Aorta (tissue), 5 donors: ENCODE measurements at regions of chr11 and their contacts with region 1.

Region 1: DNA sequence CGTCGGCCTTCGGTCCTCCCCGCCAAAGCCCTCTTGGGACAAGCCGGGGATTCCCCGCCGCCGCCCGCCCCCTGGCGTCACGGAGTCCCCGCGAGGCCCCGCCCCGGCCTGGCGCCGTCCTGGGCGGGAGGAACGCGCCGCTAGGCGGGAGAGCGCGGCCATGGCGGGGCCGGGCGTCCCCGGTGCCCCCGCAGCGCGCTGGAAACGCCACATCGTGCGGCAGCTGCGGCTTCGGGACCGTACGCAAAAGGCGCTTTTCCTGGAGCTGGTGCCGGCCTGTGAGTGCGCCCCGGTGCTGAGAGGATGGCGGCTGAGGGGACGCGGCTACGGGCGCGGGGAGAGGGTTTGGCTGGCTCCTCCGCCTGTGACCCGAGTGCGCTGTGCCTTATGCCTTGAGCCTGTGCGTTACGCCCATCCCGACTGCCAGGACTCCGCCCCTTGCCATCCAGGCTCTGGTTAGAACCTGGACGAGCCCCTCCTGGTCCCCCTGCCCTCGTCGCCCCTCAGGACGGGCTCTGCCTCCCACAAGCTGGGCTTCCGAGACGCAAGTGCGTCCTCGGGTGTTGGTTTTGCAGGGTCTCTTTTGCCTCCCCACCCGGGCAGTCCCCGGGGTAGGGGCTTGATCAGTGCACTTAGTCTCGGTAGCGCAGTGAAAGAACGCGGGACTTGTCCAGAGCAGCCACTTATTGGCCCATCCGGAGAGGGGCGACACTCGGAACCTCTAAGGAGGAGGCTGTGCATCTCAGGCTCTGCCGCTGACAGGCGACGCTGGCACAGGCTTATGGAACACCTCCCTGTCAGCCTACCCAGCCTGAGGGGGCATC is at the start of gene ATG16L2:
- DNase-seq: peak; percentile 93 to 97
- ATAC-seq: peak; percentile 96
- H3K4me3 ChIP-seq: peak within 1 kb of the TSS; percentile 46 to 86
- H3K27ac ChIP-seq: peak within 1 kb of the TSS; percentile 17 to 85
- H3K4me1 ChIP-seq: no peaks in the 10 kb centered on the region
- H3K27me3 ChIP-seq: peaks cover 0 to 2% of the 10 kb centered on the region in 2 donors
- total RNA-seq, gene ATG16L2: 31.1 to 74.8 TPM

Region 2: DNA sequence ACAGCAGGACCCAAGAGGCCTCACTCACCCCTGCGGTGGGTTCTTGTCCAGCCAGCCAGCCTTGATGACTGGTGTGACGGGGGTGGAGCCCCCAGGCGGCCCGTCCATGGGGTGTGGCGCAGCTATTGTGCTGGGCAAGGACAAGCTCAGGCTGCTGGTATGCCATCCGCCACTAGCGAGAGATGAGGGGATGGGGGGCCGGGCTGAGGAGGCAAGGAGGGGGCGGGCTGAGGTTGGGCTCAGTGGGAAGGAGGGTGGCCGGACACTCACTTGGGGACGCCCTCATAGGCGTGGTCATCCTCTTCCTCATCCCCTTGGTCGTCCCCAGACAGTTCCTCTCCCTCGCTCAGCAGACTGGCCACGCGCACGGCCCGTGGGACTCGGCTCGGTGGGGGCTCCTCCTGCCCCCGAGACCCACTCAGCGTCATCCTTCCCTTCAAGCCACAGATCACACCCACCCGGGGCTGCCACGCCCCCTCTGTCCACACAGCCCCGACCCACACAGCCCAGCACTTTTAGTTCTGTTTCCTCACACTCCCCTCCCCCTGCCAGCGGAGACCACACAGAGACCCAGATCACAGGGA is 102.2 kb before region 1 on chr11:
- intact Hi-C with region 1: no loop called
- DNase-seq: peak in 1 of 2 donors; percentile 92
- ATAC-seq: peak; percentile 61
- H3K4me3 ChIP-seq: no peak overlapping the region
- H3K27ac ChIP-seq: no peak overlapping the region
- H3K4me1 ChIP-seq: no peaks in the 10 kb centered on the region
- H3K27me3 ChIP-seq: no peaks in the 10 kb centered on the region

Region 3: DNA sequence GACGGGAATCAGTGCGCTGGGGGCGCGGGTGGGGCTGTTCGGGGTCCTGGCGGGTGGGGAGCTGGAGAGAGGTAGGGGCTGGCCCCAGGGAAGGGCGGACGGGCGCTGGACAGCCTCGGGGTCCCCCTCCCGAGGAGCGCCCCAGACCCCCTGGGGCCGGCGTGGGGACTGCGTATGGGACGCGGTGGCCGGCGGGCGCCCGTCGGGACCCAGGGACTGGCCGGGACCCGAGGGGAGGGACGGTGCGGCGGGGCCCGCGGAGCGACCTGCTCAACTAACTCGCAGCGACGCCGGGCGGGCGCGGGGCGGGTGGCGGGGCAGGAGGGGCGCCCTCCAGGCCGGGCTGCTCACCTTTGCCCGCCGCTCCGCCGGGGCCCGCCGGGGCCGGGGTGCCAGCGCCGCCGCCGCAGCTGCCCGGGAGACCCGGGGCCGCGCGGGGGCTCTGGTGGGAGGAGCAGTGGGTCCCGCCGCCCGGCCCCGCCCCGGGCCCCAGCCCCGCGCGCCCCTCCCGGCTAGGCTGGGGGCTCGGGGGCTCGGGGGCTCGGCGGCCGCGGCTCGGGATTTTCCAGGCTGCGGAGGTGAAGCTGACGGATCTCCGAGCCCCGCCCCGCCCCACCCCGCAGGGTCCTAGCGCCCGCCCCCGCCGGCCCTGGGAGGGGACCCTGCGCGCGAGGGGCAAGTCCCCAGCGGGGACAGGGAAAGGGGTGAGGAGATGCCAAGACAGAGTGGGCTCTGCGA is 33.0 kb before region 1 on chr11:
- intact Hi-C with region 1: loop called in 1 of 2 experiments (anchors 5 kb)
- DNase-seq: peak in 1 of 2 donors; percentile 85
- ATAC-seq: no peak
- H3K4me3 ChIP-seq: peak overlapping the region; percentile 70 to 87
- H3K27ac ChIP-seq: no peak overlapping the region
- H3K4me1 ChIP-seq: no peaks in the 10 kb centered on the region
- H3K27me3 ChIP-seq: no peaks in the 10 kb centered on the region

Region 4: GRCh38 chr11:72793425-72794367 is 20.8 kb before region 1 on chr11 and contains the start of gene STARD10:
- intact Hi-C with region 1: loop called in 1 of 2 experiments (anchors 2 kb)
- DNase-seq: peak; percentile 97 to 99
- ATAC-seq: peak; percentile 99
- H3K4me3 ChIP-seq: peak within 1 kb of the TSS; percentile 23 to 47
- H3K27ac ChIP-seq: peak within 1 kb of the TSS; percentile 29 to 85
- H3K4me1 ChIP-seq: peaks cover 0 to 3% of the 10 kb centered on the region in 2 donors
- H3K27me3 ChIP-seq: no peaks in the 10 kb centered on the region
- total RNA-seq, gene STARD10: 17.7 to 30.7 TPM